Thyroid gland (tissue), 4 donors: ENCODE measurements at regions of chr5 and their contacts with region 1.

Region 1: GRCh38 chr5:145681686-145682085 is 153.5 kb downstream of the PRELID2 start:
- DNase-seq: peak; percentile 50 to 51
- H3K4me3 ChIP-seq: no peak overlapping the region
- H3K27ac ChIP-seq: no peak overlapping the region
- H3K4me1 ChIP-seq: peaks cover 0 to 7% of the 10 kb centered on the region in 2 donors
- H3K27me3 ChIP-seq: no peaks in the 10 kb centered on the region
- CTCF ChIP-seq: peak; percentile 25 to 82 (median 74)
- POLR2A ChIP-seq: no peak

Region 2: DNA sequence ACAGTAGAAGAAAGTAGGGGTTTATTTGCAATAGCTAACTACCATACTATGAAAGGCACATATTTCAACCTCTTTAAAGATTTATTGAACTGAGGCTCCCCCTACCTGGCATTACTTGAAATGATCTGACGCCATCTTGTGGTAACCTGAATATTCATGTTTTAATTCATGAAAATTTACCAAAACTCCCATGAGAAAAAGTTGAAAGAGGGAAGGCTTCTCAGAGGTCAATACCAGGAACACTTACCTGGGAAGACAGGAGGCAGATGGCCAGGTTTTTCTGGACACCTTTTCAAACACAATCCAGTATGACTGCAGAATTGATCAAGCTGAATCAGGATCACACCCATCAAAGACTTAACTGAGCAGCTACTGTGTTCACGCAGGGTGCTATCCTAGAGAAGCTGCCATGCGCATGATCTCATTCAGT is 144.1 kb after region 1 on chr5:
- intact Hi-C with region 1: loop called (anchors 10 kb)
- DNase-seq: no peak
- H3K4me3 ChIP-seq: no peak overlapping the region
- H3K27ac ChIP-seq: no peak overlapping the region
- H3K4me1 ChIP-seq: peaks cover 9 to 13% of the 10 kb centered on the region in 2 donors
- H3K27me3 ChIP-seq: no peaks in the 10 kb centered on the region
- CTCF ChIP-seq: peak; percentile 32 to 82 (median 60)
- POLR2A ChIP-seq: no peak

Region 3: GRCh38 chr5:145856285-145856818 is 174.7 kb after region 1 on chr5:
- intact Hi-C with region 1: no loop called
- DNase-seq: peak; percentile 42 to 51
- H3K4me3 ChIP-seq: peak overlapping the region in 1 of 3 donors; percentile 10
- H3K27ac ChIP-seq: peak overlapping the region; percentile 37 to 64 (median 48)
- H3K4me1 ChIP-seq: peaks cover 20 to 32% of the 10 kb centered on the region in 2 donors
- H3K27me3 ChIP-seq: no peaks in the 10 kb centered on the region
- CTCF ChIP-seq: peak in 1 of 6 experiments; percentile 22
- POLR2A ChIP-seq: no peak

Region 4: DNA sequence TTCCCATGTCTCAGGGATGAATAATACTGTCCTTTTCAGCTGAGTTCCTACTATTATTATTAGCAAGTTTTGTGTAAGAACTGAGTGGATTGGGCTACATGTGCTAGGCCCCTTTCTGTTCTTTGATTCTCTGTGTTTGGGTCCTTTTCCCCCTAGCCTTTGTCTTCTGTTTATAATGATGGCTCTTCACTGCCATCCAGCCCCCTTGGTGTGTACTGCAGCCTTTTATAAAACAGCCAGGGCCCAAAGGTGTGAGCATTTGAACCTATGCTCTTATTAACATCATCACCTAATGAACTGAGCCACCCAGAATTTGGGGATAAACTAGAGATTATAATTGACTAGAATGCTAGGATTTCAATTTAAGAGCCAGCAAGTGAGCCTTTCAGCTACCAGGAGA is 371.1 kb after region 1 on chr5:
- intact Hi-C with region 1: loop called (anchors 10 kb)
- DNase-seq: no peak
- H3K4me3 ChIP-seq: no peak overlapping the region
- H3K27ac ChIP-seq: no peak overlapping the region
- H3K4me1 ChIP-seq: peaks cover 17 to 25% of the 10 kb centered on the region in 2 donors
- H3K27me3 ChIP-seq: no peaks in the 10 kb centered on the region
- CTCF ChIP-seq: peak in 3 of 6 experiments; percentile 11 to 28 (median 16)
- POLR2A ChIP-seq: no peak

Region 5: GRCh38 chr5:146124580-146124979 is 442.9 kb after region 1 on chr5:
- intact Hi-C with region 1: loop called (anchors 10 kb)
- DNase-seq: no peak
- H3K4me3 ChIP-seq: no peak overlapping the region
- H3K27ac ChIP-seq: no peak overlapping the region
- H3K4me1 ChIP-seq: no peaks in the 10 kb centered on the region
- H3K27me3 ChIP-seq: no peaks in the 10 kb centered on the region
- CTCF ChIP-seq: no peak
- POLR2A ChIP-seq: no peak